Activated CD4-positive, alpha-beta memory T cell treated with anti-CD3 and anti-CD28 coated beads for 36 hours (primary cell): ENCODE measurements at regions of chr12 and their contacts with region 1.

Region 1: GRCh38 chr12:22624870-22625761 is at the start of gene ETNK1:
- DNase-seq: peak; percentile 92
- H3K4me3 Mint-ChIP-seq: peak within 1 kb of the TSS; percentile 89
- H3K27ac Mint-ChIP-seq: peak within 1 kb of the TSS; percentile 87
- H3K4me1 Mint-ChIP-seq: peaks cover 35% of the 10 kb centered on the region
- H3K27me3 Mint-ChIP-seq: no peaks in the 10 kb centered on the region
- total RNA-seq, gene ETNK1: 59.0 to 61.0 TPM

Region 2: GRCh38 chr12:22046090-22046967 is 578.8 kb before region 1 on chr12 and contains the start of gene CMAS:
- CTCF ChIA-PET with region 1: no interaction called
- POLR2A ChIA-PET with region 1: no interaction called
- intact Hi-C with region 1: loop called (anchors 10 kb)
- DNase-seq: peak; percentile 87
- H3K4me3 Mint-ChIP-seq: peak within 1 kb of the TSS; percentile 96
- H3K27ac Mint-ChIP-seq: peak within 1 kb of the TSS; percentile 89
- H3K4me1 Mint-ChIP-seq: peaks cover 51% of the 10 kb centered on the region
- H3K27me3 Mint-ChIP-seq: no peaks in the 10 kb centered on the region
- total RNA-seq, gene CMAS: 51.1 to 51.2 TPM

Region 3: DNA sequence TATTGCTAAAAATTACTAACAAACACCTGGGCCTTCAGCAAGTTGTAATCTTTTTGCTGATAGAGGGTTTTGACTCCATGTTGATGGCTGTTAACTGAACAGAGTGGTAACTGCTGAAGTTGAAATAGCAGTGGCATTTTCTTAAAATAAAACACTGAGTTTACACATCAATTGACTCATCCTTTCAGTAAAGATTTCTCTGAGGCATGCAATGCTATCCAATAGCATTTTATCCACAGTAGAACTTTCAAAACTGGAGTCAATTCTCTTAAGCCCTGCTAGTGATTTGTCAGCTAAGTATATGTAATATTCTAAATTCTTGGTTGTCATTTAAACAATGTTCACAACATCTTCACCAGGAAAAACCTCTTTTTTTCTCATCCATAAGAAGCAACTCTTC is 519.6 kb before region 1 on chr12:
- CTCF ChIA-PET with region 1: no interaction called
- POLR2A ChIA-PET with region 1: no interaction called
- intact Hi-C with region 1: no loop called
- DNase-seq: no peak
- H3K4me3 Mint-ChIP-seq: no peak overlapping the region
- H3K27ac Mint-ChIP-seq: no peak overlapping the region
- H3K4me1 Mint-ChIP-seq: peaks cover 42% of the 10 kb centered on the region
- H3K27me3 Mint-ChIP-seq: no peaks in the 10 kb centered on the region

Region 4: GRCh38 chr12:22477166-22477893 is 147.8 kb before region 1 on chr12:
- CTCF ChIA-PET with region 1: no interaction called
- POLR2A ChIA-PET with region 1: no interaction called
- intact Hi-C with region 1: loop called (anchors 2 kb)
- DNase-seq: no peak
- H3K4me3 Mint-ChIP-seq: no peak overlapping the region
- H3K27ac Mint-ChIP-seq: peak overlapping the region; percentile 14
- H3K4me1 Mint-ChIP-seq: peaks cover 27% of the 10 kb centered on the region
- H3K27me3 Mint-ChIP-seq: no peaks in the 10 kb centered on the region

Region 5: GRCh38 chr12:22577667-22578066 is 47.4 kb before region 1 on chr12:
- CTCF ChIA-PET with region 1: no interaction called
- POLR2A ChIA-PET with region 1: no interaction called
- intact Hi-C with region 1: no loop called
- DNase-seq: no peak
- H3K4me3 Mint-ChIP-seq: no peak overlapping the region
- H3K27ac Mint-ChIP-seq: no peak overlapping the region
- H3K4me1 Mint-ChIP-seq: no peaks in the 10 kb centered on the region
- H3K27me3 Mint-ChIP-seq: no peaks in the 10 kb centered on the region

Region 6: GRCh38 chr12:22598141-22598762 is 26.9 kb before region 1 on chr12:
- CTCF ChIA-PET with region 1: no interaction called
- POLR2A ChIA-PET with region 1: interaction called, 4 read pairs
- intact Hi-C with region 1: loop called (anchors 1 kb)
- DNase-seq: no peak
- H3K4me3 Mint-ChIP-seq: no peak overlapping the region
- H3K27ac Mint-ChIP-seq: no peak overlapping the region
- H3K4me1 Mint-ChIP-seq: peaks cover 18% of the 10 kb centered on the region
- H3K27me3 Mint-ChIP-seq: no peaks in the 10 kb centered on the region

Region 7: GRCh38 chr12:22700106-22700505 is 75.0 kb after region 1 on chr12:
- CTCF ChIA-PET with region 1: no interaction called
- POLR2A ChIA-PET with region 1: no interaction called
- intact Hi-C with region 1: no loop called
- DNase-seq: no peak
- H3K4me3 Mint-ChIP-seq: no peak overlapping the region
- H3K27ac Mint-ChIP-seq: no peak overlapping the region
- H3K4me1 Mint-ChIP-seq: no peaks in the 10 kb centered on the region
- H3K27me3 Mint-ChIP-seq: peaks cover 2% of the 10 kb centered on the region